Activated naive CD8-positive, alpha-beta T cell treated with anti-CD3 and anti-CD28 coated beads, Interleukin-2, amount 10 ng/mL, durations not matched to agents 7 days and 5 days (primary cell): ENCODE measurements at regions of chr1 and their contacts with region 1.

Region 1: GRCh38 chr1:117059678-117060440 is at the start of gene TTF2:
- DNase-seq: peak; percentile 93
- ATAC-seq: peak; percentile 93
- H3K4me3 Mint-ChIP-seq: no peak within 1 kb of the TSS
- H3K27ac Mint-ChIP-seq: no peak within 1 kb of the TSS
- H3K4me1 Mint-ChIP-seq: peaks cover 46% of the 10 kb centered on the region
- H3K27me3 Mint-ChIP-seq: no peaks in the 10 kb centered on the region
- total RNA-seq, gene TTF2: 79.4 to 82.9 TPM

Region 2: GRCh38 chr1:116725798-116726197 is 334.1 kb before region 1 on chr1:
- POLR2A ChIA-PET with region 1: interaction called, 13 read pairs
- DNase-seq: no peak
- ATAC-seq: no peak
- H3K4me3 Mint-ChIP-seq: no peak overlapping the region
- H3K27ac Mint-ChIP-seq: no peak overlapping the region
- H3K4me1 Mint-ChIP-seq: peaks cover 21% of the 10 kb centered on the region
- H3K27me3 Mint-ChIP-seq: no peaks in the 10 kb centered on the region

Region 3: DNA sequence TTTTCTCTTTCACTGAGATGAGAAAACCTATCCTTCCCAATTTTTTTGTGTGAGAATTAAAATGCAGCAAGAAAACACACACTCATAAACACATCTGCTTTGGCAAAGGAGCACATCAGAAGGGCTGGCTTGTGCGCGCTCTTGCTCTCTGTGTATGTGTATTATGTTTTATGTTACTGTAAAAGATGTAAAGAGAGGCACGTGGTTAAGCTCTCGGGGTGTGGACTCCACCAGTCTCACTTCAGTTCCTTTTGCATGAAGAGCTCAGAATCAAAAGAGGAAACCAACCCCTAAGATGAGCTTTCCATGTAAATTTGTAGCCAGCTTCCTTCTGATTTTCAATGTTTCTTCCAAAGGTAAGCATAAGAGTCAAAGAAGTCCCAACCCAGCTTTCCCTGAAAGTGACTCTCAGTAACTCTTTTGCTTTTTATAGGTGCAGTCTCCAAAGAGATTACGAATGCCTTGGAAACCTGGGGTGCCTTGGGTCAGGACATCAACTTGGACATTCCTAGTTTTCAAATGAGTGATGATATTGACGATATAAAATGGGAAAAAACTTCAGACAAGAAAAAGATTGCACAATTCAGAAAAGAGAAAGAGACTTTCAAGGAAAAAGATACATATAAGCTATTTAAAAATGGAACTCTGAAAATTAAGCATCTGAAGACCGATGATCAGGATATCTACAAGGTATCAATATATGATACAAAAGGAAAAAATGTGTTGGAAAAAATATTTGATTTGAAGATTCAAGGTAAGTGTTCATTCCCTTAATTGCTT is 305.5 kb before region 1 on chr1 and contains the start of gene CD2:
- POLR2A ChIA-PET with region 1: interaction called, 19 read pairs
- DNase-seq: peak; percentile 50
- ATAC-seq: peak; percentile 80
- H3K4me3 Mint-ChIP-seq: peak within 1 kb of the TSS; percentile 98
- H3K27ac Mint-ChIP-seq: peak within 1 kb of the TSS; percentile 97
- H3K4me1 Mint-ChIP-seq: peaks cover 28% of the 10 kb centered on the region
- H3K27me3 Mint-ChIP-seq: no peaks in the 10 kb centered on the region
- total RNA-seq, gene CD2: 227 to 229 TPM

Region 4: DNA sequence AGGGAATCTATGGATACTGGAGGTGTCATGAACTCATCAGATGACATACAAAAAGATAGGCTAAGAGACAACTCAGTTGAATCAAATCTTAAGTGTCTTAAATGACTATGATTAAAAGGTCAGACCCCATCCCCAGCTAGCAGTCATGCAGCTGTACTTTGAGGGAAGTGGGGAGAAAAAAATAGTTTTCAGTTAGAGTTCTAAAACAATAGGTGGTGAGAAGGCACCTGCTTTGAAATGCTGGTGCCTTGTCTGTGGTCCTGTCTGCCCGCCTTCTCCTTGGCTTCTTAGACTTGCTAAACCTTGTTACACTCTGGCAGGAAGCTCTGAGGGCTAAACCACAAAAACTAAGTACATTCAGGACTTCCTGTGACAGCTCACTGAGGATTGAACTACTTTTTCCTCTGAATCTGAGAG is 290.3 kb before region 1 on chr1:
- POLR2A ChIA-PET with region 1: interaction called, 33 read pairs
- DNase-seq: no peak
- ATAC-seq: peak; percentile 68
- H3K4me3 Mint-ChIP-seq: peak overlapping the region; percentile 73
- H3K27ac Mint-ChIP-seq: peak overlapping the region; percentile 96
- H3K4me1 Mint-ChIP-seq: peaks cover 76% of the 10 kb centered on the region
- H3K27me3 Mint-ChIP-seq: no peaks in the 10 kb centered on the region

Region 5: GRCh38 chr1:116826818-116827606 is 232.8 kb before region 1 on chr1:
- POLR2A ChIA-PET with region 1: interaction called, 15 read pairs
- DNase-seq: peak; percentile 53
- ATAC-seq: peak; percentile 92
- H3K4me3 Mint-ChIP-seq: peak overlapping the region; percentile 62
- H3K27ac Mint-ChIP-seq: peak overlapping the region; percentile 95
- H3K4me1 Mint-ChIP-seq: peaks cover 40% of the 10 kb centered on the region
- H3K27me3 Mint-ChIP-seq: no peaks in the 10 kb centered on the region

Region 6: DNA sequence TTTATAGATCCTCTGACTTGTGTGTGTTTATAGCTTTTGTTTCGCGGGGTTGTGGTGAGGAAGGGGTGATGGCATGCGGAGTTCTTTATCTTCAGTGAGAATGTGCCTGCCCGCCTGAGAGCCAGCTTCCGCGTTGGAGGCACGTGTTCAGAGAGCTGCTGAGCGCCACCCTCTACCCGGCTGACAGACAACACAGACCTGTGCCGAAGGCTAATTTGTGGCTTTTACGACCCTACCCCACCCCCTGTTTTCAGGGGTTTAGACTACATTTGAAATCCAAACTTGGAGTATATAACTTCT is 72.7 kb before region 1 on chr1:
- POLR2A ChIA-PET with region 1: interaction called, 11 read pairs
- DNase-seq: peak; percentile 55
- ATAC-seq: peak; percentile 88
- H3K4me3 Mint-ChIP-seq: peak overlapping the region; percentile 78
- H3K27ac Mint-ChIP-seq: peak overlapping the region; percentile 90
- H3K4me1 Mint-ChIP-seq: peaks cover 25% of the 10 kb centered on the region
- H3K27me3 Mint-ChIP-seq: peaks cover 2% of the 10 kb centered on the region

Region 7: GRCh38 chr1:117237696-117238381 is 178.0 kb after region 1 on chr1:
- POLR2A ChIA-PET with region 1: no interaction called
- DNase-seq: no peak
- ATAC-seq: no peak
- H3K4me3 Mint-ChIP-seq: no peak overlapping the region
- H3K27ac Mint-ChIP-seq: no peak overlapping the region
- H3K4me1 Mint-ChIP-seq: no peaks in the 10 kb centered on the region
- H3K27me3 Mint-ChIP-seq: peaks cover 3% of the 10 kb centered on the region